IMR-90 (cell line): ENCODE measurements at regions of chr5 and their contacts with region 1.

Region 1: GRCh38 chr5:18270683-18271338 is 636.6 kb downstream of the TAF11L14 start:
- DNase-seq: no peak
- ATAC-seq: no peak
- H3K4me3 ChIP-seq: no peak overlapping the region
- H3K27ac ChIP-seq: no peak overlapping the region
- H3K4me1 ChIP-seq: no peaks in the 10 kb centered on the region
- H3K27me3 ChIP-seq: no peaks in the 10 kb centered on the region
- CTCF ChIP-seq: no peak
- POLR2A ChIP-seq: no peak
- RAD21 ChIP-seq: no peak

Region 2: DNA sequence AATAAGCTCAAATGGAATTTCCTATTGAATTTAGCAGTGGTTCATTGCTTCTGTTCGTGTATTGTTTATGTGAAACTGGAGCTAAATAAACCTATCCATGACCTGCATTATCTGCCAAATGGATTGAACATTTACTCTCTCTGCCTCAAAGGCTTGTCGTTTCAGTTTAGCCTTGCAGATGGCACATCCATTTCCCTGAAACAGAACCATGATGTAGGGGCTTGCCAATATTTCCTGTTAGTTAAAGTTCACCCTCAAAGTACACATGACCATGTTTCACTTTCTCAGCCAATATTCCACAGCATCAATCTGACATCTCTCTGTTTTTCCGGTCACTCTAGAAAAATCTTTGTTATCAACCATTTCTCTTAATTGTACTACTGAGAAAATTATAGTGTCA is 91.2 kb before region 1 on chr5:
- CTCF ChIA-PET with region 1: no interaction called
- POLR2A ChIA-PET with region 1: interaction called, 11 read pairs
- dilution Hi-C with region 1: no loop called
- in situ Hi-C with region 1: no loop called
- intact Hi-C with region 1: no loop called
- DNase-seq: no peak
- ATAC-seq: no peak
- H3K4me3 ChIP-seq: no peak overlapping the region
- H3K27ac ChIP-seq: no peak overlapping the region
- H3K4me1 ChIP-seq: no peaks in the 10 kb centered on the region
- H3K27me3 ChIP-seq: no peaks in the 10 kb centered on the region
- CTCF ChIP-seq: no peak
- POLR2A ChIP-seq: no peak
- RAD21 ChIP-seq: no peak

Region 3: DNA sequence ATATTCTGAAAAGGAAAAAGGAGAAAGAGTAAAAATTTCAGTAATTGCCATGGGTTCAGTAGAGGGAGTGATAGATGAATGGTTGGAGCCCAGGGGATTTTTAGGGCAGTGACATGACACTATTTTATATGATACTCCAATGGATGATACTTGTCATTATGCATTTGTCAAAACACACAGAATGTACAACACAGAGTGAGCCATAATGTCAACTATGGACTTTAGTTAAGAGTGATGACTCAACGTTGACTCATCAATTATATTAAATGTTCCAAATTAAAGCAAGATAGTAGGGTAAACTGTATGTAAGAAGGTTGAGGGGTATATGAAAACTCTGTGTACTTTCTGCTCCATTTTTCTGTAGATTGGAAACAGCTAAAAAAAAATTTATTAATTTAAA is 50.2 kb before region 1 on chr5:
- CTCF ChIA-PET with region 1: no interaction called
- POLR2A ChIA-PET with region 1: no interaction called
- dilution Hi-C with region 1: no loop called
- in situ Hi-C with region 1: no loop called
- intact Hi-C with region 1: no loop called
- DNase-seq: no peak
- ATAC-seq: no peak
- H3K4me3 ChIP-seq: no peak overlapping the region
- H3K27ac ChIP-seq: no peak overlapping the region
- H3K4me1 ChIP-seq: no peaks in the 10 kb centered on the region
- H3K27me3 ChIP-seq: no peaks in the 10 kb centered on the region
- CTCF ChIP-seq: no peak
- POLR2A ChIP-seq: no peak
- RAD21 ChIP-seq: no peak

Region 4: DNA sequence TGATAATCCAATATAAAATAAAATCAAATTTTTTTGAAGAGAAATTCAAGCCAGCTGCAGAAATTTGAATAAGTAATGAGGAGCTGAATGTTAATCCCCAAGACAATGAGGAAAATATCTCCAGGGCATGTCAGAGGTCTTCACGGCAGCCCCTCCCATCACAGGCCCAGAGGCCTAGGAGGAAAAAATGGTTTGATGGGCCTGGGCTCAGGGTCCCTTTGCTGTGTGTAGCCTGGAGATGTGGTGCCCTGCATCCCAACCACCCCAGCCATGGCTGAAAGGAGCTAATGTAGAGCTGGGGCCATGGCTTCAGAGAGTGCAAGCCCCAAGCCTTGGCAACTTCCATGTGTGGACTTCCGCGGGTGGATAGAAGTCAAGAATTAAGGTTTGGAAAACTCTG is 18.3 kb before region 1 on chr5:
- CTCF ChIA-PET with region 1: no interaction called
- POLR2A ChIA-PET with region 1: no interaction called
- dilution Hi-C with region 1: no loop called
- in situ Hi-C with region 1: no loop called
- intact Hi-C with region 1: no loop called
- DNase-seq: no peak
- ATAC-seq: no peak
- H3K4me3 ChIP-seq: no peak overlapping the region
- H3K27ac ChIP-seq: no peak overlapping the region
- H3K4me1 ChIP-seq: no peaks in the 10 kb centered on the region
- H3K27me3 ChIP-seq: no peaks in the 10 kb centered on the region
- CTCF ChIP-seq: no peak
- POLR2A ChIP-seq: no peak
- RAD21 ChIP-seq: no peak